Activated CD4-positive, alpha-beta T cell treated with anti-CD3 and anti-CD28 coated beads for 36 hours (primary cell): ENCODE measurements at regions of chr21 and their contacts with region 1.

Region 1: DNA sequence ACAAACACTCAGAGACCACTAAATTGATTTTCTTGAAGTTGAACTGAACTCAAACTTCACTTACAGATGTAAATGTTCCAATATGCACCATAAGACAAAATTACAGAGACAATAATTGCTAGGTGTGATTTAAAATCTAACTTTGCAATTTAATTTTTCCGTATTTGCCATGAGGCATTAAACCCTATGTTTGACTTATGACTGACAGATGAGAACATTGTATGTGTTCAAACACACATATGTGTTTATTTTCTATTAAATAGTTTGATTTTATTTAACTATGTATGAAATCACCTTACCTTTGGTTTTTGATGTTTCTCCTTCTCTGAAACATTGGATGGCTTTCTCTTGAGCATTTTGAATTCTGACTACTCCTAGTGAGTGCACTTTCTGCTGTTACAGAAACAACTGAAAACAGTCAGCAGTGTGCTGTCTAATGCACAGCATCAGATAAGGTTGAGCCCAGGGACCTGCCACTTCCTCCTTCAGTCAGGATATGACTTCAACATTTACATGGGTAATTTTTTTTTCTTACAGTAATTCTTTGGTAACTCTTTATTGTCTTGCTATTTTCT is at the start of gene SAMSN1:
- DNase-seq: peak; percentile 82
- ATAC-seq: peak; percentile 90
- H3K4me3 Mint-ChIP-seq: peak within 1 kb of the TSS; percentile 83
- H3K27ac Mint-ChIP-seq: peak within 1 kb of the TSS; percentile 89
- H3K4me1 Mint-ChIP-seq: peaks cover 53% of the 10 kb centered on the region
- H3K27me3 Mint-ChIP-seq: no peaks in the 10 kb centered on the region
- total RNA-seq, gene SAMSN1: 39.8 to 43.5 TPM

Region 2: DNA sequence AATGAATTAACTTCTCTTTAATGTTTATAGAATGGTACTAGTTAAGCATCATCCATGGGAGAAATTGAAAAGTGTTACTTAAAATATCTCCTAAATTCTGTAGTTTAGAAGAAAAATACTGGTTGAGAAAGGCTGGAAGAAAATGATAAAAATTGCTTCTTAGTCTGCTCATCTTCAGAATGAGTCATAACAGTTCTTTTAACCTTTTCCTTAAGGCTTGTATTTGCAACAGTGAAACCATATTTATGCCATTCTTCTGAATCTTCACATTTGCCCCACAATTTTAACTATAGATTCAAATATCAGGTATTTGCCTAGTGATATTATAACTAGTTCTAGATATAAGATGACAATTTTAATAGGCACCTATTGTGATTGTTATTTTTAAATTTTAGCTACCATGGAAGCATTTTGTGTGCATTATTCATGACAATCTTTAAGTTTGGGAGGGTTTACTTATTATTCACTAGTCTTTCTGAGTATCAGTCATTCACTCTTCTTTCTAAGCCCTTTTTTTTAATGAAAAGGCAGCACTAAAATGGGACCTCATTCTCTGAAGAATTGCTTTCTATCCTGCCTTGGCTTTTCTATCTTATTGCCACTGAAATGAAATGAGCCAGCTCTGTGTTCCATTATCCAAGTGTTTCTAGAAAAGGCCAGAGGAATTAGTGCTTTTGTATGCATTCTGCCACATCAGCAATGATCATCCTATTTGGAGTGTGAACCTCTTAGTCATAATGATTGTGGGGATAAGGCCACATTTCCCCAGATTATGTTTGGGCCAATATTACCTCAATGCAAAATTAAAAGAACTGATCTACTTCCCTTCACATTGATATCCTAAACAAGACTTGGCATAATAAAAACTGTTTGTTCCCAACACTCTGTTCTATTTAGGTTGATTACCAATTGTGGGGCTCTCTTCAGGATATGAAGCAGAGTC is 58.2 kb before region 1 on chr21:
- CTCF ChIA-PET with region 1: no interaction called
- POLR2A ChIA-PET with region 1: no interaction called
- intact Hi-C with region 1: loop called in 1 of 2 experiments (anchors 2 kb)
- DNase-seq: no peak
- ATAC-seq: peak; percentile 72
- H3K4me3 Mint-ChIP-seq: no peak overlapping the region
- H3K27ac Mint-ChIP-seq: peak overlapping the region; percentile 68
- H3K4me1 Mint-ChIP-seq: peaks cover 56% of the 10 kb centered on the region
- H3K27me3 Mint-ChIP-seq: no peaks in the 10 kb centered on the region

Region 3: GRCh38 chr21:14533504-14534428 is 12.2 kb before region 1 on chr21:
- CTCF ChIA-PET with region 1: interaction called, 11 read pairs
- POLR2A ChIA-PET with region 1: interaction called, 3 read pairs
- intact Hi-C with region 1: loop called (anchors 1 kb)
- DNase-seq: peak; percentile 21
- ATAC-seq: peak; percentile 78
- H3K4me3 Mint-ChIP-seq: peak overlapping the region; percentile 83
- H3K27ac Mint-ChIP-seq: peak overlapping the region; percentile 100
- H3K4me1 Mint-ChIP-seq: peaks cover 80% of the 10 kb centered on the region
- H3K27me3 Mint-ChIP-seq: no peaks in the 10 kb centered on the region

Region 4: GRCh38 chr21:14591882-14592281 is 45.9 kb after region 1 on chr21:
- CTCF ChIA-PET with region 1: no interaction called
- POLR2A ChIA-PET with region 1: no interaction called
- intact Hi-C with region 1: loop called in 1 of 2 experiments (anchors 2 kb)
- DNase-seq: no peak
- ATAC-seq: peak; percentile 40
- H3K4me3 Mint-ChIP-seq: no peak overlapping the region
- H3K27ac Mint-ChIP-seq: peak overlapping the region; percentile 32
- H3K4me1 Mint-ChIP-seq: peaks cover 26% of the 10 kb centered on the region
- H3K27me3 Mint-ChIP-seq: no peaks in the 10 kb centered on the region

Region 5: DNA sequence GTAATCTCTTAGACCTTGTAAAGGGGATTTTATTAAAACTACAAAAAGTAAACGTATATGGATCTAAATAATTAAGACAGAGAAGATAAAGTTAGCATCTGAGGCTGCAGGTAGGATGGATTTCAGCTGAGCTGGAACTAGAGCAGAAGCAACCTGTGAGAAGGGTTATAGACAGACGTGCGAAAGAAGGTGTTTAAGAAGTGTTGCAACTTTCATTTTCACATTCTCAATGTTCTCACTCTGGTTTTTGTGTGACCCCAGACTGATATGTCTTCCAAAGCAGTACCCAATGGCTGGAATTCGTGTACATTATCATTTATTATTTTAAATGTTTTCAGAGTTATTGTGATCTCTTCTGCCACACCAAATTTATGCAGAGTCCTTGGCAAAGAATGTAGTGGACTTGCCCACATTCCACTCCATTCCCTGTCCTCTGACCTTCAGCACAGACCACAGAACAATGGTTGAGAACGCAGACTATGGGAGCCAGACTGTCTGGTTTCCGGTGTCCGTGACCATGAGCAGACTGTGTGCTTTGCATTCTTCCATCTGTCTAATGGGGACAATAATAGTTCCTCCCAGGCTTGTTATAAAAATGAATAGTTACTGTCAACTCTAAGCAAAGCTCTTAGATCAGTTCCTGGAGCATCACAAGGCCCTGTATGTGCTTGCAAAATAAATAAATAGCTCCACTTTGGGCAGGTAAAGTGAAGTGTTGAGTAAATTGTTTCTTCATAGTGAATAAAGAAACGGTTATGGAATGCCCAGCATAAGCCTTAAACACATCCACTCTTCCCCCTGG is 140.7 kb after region 1 on chr21:
- CTCF ChIA-PET with region 1: interaction called, 4 read pairs
- POLR2A ChIA-PET with region 1: no interaction called
- intact Hi-C with region 1: loop called in 1 of 2 experiments (anchors 5 kb)
- DNase-seq: no peak
- ATAC-seq: peak; percentile 10
- H3K4me3 Mint-ChIP-seq: no peak overlapping the region
- H3K27ac Mint-ChIP-seq: no peak overlapping the region
- H3K4me1 Mint-ChIP-seq: peaks cover 28% of the 10 kb centered on the region
- H3K27me3 Mint-ChIP-seq: no peaks in the 10 kb centered on the region

Region 6: GRCh38 chr21:14825514-14825974 is 279.6 kb after region 1 on chr21:
- CTCF ChIA-PET with region 1: no interaction called
- POLR2A ChIA-PET with region 1: no interaction called
- intact Hi-C with region 1: loop called in 1 of 2 experiments (anchors 10 kb)
- DNase-seq: no peak
- ATAC-seq: peak; percentile 83
- H3K4me3 Mint-ChIP-seq: no peak overlapping the region
- H3K27ac Mint-ChIP-seq: no peak overlapping the region
- H3K4me1 Mint-ChIP-seq: peaks cover 12% of the 10 kb centered on the region
- H3K27me3 Mint-ChIP-seq: no peaks in the 10 kb centered on the region